K562 (cell line): ENCODE measurements at regions of chr16 and their contacts with region 1.

Region 1: DNA sequence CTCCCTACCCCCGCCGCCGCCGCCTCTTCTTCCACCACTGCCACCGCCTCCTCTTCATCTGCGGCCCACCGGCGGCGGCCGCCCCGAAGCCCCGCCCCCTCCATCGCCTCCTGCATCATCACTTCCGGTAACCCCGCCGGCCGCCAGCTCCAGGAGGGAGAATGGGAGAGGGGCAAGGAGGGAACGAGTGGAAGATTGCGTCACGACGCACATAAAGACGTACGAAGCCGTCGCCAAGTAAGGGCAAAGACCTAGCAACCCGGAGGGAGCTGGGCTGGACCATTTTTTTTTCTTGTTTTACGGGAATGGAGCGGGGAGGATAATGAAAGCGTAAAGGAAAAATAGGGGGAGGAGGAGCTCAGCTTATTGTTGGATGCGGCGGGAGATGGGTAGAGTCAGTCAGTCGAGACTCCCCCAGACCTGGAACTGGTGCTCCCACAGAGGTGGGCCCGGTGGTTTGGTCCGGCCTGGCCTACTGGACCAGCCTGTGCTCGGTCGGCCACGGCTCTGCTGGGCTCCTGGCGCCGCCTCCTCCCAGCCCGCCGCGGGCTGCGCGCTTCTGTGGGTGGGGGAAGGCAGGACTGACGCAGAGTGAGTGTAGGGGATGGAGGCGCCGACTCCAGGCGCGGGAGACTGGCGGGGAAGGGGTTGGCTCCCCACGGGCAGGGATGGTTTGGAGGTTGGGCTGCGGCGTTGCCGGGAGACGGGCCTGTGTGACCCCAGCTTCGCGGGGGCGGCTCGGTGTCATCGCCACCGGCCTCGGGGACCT is at the starts of genes DCUN1D3 and LYRM1:
- DNase-seq: peak; percentile 95 to 99 (median 96)
- ATAC-seq: peak; percentile 95
- H3K4me3 ChIP-seq: peak within 1 kb of the TSS; percentile 85
- H3K27ac ChIP-seq: peak within 1 kb of the TSS; percentile 92
- H3K4me1 ChIP-seq: peaks cover 32 to 50% of the 10 kb centered on the region in 2 experiments
- H3K27me3 ChIP-seq: no peaks in the 10 kb centered on the region
- CTCF ChIP-seq: no peak
- EP300 ChIP-seq: no peak
- POLR2A ChIP-seq: peak; percentile 83
- RAD21 ChIP-seq: 0 out of 4 replicates have a peak, but pooled peaks of 1 of the 2 experiments have one; percentile 4
- polyA plus RNA-seq, gene DCUN1D3: 1.0 to 1.9 TPM
- polyA plus RNA-seq, gene LYRM1: 40.0 to 44.1 TPM

Region 2: DNA sequence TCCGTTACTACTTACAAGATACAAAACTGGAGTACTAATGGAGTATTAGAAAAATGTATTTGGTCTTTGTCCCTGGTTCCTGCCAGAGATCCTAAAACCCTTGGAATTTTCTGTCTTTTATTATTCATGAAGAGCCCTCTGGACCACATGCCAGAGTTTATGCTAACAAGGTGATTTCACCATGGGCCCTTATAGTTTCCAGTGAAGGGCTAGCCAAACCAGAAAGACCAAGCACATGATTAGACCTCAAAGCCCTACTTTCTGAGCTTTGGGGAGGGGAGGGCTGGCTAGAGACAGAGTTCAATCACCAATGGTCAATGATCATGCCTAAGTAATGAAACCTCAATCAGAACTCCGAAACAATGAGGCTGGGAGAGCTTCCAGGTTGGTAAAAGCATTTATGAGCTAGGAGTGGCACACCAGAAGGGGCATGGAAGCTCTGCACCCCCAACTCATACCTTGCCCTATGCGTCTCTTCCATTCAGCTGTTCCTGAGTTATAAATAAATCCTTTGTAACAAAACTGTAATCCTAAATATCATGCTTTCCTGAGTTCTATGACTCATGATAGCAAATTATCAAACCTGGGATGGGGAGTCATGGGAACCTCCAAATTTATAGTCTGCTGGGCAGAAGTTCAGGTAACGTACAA is 10.7 kb before region 1 on chr16:
- CTCF ChIA-PET with region 1: no interaction called
- POLR2A ChIA-PET with region 1: interaction called, 19 read pairs
- in situ Hi-C with region 1: no loop called
- intact Hi-C with region 1: no loop called
- DNase-seq: no peak
- ATAC-seq: no peak
- H3K4me3 ChIP-seq: no peak overlapping the region
- H3K27ac ChIP-seq: no peak overlapping the region
- H3K4me1 ChIP-seq: peaks cover 0 to 10% of the 10 kb centered on the region in 2 experiments; a peak in 2 of 5 replicates
- H3K27me3 ChIP-seq: no peaks in the 10 kb centered on the region
- CTCF ChIP-seq: no peak
- EP300 ChIP-seq: no peak
- POLR2A ChIP-seq: no peak
- RAD21 ChIP-seq: no peak

Region 3: GRCh38 chr16:20910781-20911321 is 10.4 kb after region 1 on chr16:
- CTCF ChIA-PET with region 1: no interaction called
- POLR2A ChIA-PET with region 1: interaction called, 12 read pairs
- in situ Hi-C with region 1: no loop called
- intact Hi-C with region 1: no loop called
- DNase-seq: peak in 1 of 4 experiments; percentile 40
- ATAC-seq: peak; percentile 60
- H3K4me3 ChIP-seq: no peak overlapping the region
- H3K27ac ChIP-seq: peak overlapping the region; percentile 58; the same call in 1 of the 3 replicates
- H3K4me1 ChIP-seq: peaks cover 16 to 19% of the 10 kb centered on the region in 2 experiments
- H3K27me3 ChIP-seq: no peaks in the 10 kb centered on the region
- CTCF ChIP-seq: no peak
- EP300 ChIP-seq: peak; percentile 69
- POLR2A ChIP-seq: no peak
- RAD21 ChIP-seq: no peak

Region 4: DNA sequence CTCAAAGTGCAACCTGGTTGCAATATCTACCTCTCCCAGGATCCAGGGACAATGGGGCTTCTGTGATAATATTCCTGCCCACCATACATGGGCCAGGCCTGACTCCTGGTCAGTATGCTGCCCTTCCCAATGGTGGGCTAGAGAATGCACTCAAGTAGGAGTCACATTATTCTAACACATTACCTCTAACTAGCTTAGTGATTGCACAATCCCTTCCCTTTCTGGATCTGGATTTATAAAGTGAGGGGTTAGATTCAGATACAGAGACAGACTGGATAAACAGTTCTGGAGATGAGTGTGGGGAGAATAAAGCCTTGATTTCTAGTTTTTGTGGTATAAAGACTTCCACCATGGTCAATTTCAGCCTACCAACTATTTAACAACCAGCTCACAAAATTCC is 33.1 kb after region 1 on chr16:
- CTCF ChIA-PET with region 1: no interaction called
- POLR2A ChIA-PET with region 1: no interaction called
- in situ Hi-C with region 1: no loop called
- intact Hi-C with region 1: no loop called
- DNase-seq: no peak
- ATAC-seq: no peak
- H3K4me3 ChIP-seq: no peak overlapping the region
- H3K27ac ChIP-seq: no peak overlapping the region
- H3K4me1 ChIP-seq: peaks cover 0 to 6% of the 10 kb centered on the region in 2 experiments; a peak in 1 of 5 replicates
- H3K27me3 ChIP-seq: peaks cover 4 to 15% of the 10 kb centered on the region in 2 experiments; a peak in 4 of 5 replicates
- CTCF ChIP-seq: no peak
- EP300 ChIP-seq: no peak
- POLR2A ChIP-seq: no peak
- RAD21 ChIP-seq: no peak

Region 5: GRCh38 chr16:20944861-20945574 is 44.5 kb after region 1 on chr16:
- CTCF ChIA-PET with region 1: no interaction called
- POLR2A ChIA-PET with region 1: interaction called, 4 read pairs
- in situ Hi-C with region 1: no loop called
- intact Hi-C with region 1: loop called (anchors 5 kb)
- DNase-seq: peak; percentile 35 to 83 (median 42)
- ATAC-seq: peak; percentile 91
- H3K4me3 ChIP-seq: no peak overlapping the region
- H3K27ac ChIP-seq: peak overlapping the region; percentile 81
- H3K4me1 ChIP-seq: peaks cover 12 to 24% of the 10 kb centered on the region in 2 experiments
- H3K27me3 ChIP-seq: 0 out of 5 replicates have a peak, but pooled peaks cover 0 to 2% of the 10 kb centered on the region in 2 experiments
- CTCF ChIP-seq: peak in 1 of 3 experiments; percentile 28; a peak in 1 of 6 replicates
- EP300 ChIP-seq: no peak; the same call in none of the 2 replicates
- POLR2A ChIP-seq: no peak
- RAD21 ChIP-seq: peak; percentile 78 to 80

Region 6: GRCh38 chr16:20960899-20961298 is 60.4 kb after region 1 on chr16:
- CTCF ChIA-PET with region 1: no interaction called
- POLR2A ChIA-PET with region 1: no interaction called
- in situ Hi-C with region 1: no loop called
- intact Hi-C with region 1: no loop called
- DNase-seq: no peak
- ATAC-seq: no peak
- H3K4me3 ChIP-seq: no peak overlapping the region
- H3K27ac ChIP-seq: no peak overlapping the region
- H3K4me1 ChIP-seq: no peaks in the 10 kb centered on the region; a peak in 1 of 5 replicates
- H3K27me3 ChIP-seq: peaks cover 13 to 28% of the 10 kb centered on the region in 2 experiments; a peak in 4 of 5 replicates
- CTCF ChIP-seq: no peak
- EP300 ChIP-seq: no peak
- POLR2A ChIP-seq: no peak
- RAD21 ChIP-seq: no peak

Region 7: GRCh38 chr16:21060027-21060510 is 159.6 kb after region 1 on chr16:
- CTCF ChIA-PET with region 1: no interaction called
- POLR2A ChIA-PET with region 1: no interaction called
- in situ Hi-C with region 1: no loop called
- intact Hi-C with region 1: no loop called
- DNase-seq: no peak
- ATAC-seq: no peak
- H3K4me3 ChIP-seq: no peak overlapping the region
- H3K27ac ChIP-seq: no peak overlapping the region
- H3K4me1 ChIP-seq: no peaks in the 10 kb centered on the region
- H3K27me3 ChIP-seq: peaks cover 13 to 19% of the 10 kb centered on the region in 2 experiments; a peak in 4 of 5 replicates
- CTCF ChIP-seq: no peak
- EP300 ChIP-seq: no peak
- POLR2A ChIP-seq: no peak
- RAD21 ChIP-seq: no peak